Pancreas (tissue), 10 donors: ENCODE measurements at regions of chr3 and their contacts with region 1.

Region 1: GRCh38 chr3:128075516-128076482 is 23.6 kb downstream of the SEC61A1 start:
- DNase-seq: peak; percentile 78 to 99 (median 91)
- ATAC-seq: peak; percentile 82 to 96 (median 90)
- H3K4me3 ChIP-seq: peak overlapping the region in 3 of 4 donors; percentile 18 to 44 (median 31)
- H3K27ac ChIP-seq: peak overlapping the region in 3 of 4 donors; percentile 20 to 55 (median 25)
- H3K4me1 ChIP-seq: peaks cover 3 to 8% (median 7%) of the 10 kb centered on the region in 3 donors
- H3K27me3 ChIP-seq: no peaks in the 10 kb centered on the region
- CTCF ChIP-seq: peak; percentile 97 to 99 (median 98)

Region 2: DNA sequence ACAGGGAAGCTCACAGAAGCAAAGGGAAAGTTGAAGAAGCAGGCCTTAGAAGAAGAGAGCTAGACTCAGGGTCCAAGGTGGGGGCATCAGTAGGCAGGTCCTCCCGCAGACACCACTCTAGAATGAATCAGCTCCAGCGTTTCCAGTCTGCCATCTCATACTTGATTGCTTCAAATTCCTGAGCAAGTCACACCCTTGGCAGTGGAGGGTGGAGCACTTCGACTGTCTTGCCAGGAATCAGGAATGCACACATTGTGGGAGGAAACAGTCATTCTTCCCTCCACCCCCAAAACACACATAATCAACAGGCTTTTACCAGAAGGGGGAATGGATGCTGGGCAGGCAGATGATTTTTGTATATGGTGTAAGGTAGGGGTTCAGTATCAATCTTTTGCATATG is 1293.2 kb before region 1 on chr3:
- intact Hi-C with region 1: no loop called
- DNase-seq: no peak
- ATAC-seq: peak in 3 of 4 donors; percentile 26 to 38 (median 34)
- H3K4me3 ChIP-seq: no peak overlapping the region
- H3K27ac ChIP-seq: no peak overlapping the region
- H3K4me1 ChIP-seq: no peaks in the 10 kb centered on the region
- H3K27me3 ChIP-seq: no peaks in the 10 kb centered on the region
- CTCF ChIP-seq: no peak

Region 3: GRCh38 chr3:128133273-128134084 is 57.7 kb after region 1 on chr3:
- intact Hi-C with region 1: loop called in 1 of 3 experiments (anchors 5 kb)
- DNase-seq: peak in 1 of 6 donors; percentile 41
- ATAC-seq: peak in 3 of 4 donors; percentile 82 to 89 (median 85)
- H3K4me3 ChIP-seq: no peak overlapping the region
- H3K27ac ChIP-seq: no peak overlapping the region
- H3K4me1 ChIP-seq: no peaks in the 10 kb centered on the region
- H3K27me3 ChIP-seq: no peaks in the 10 kb centered on the region
- CTCF ChIP-seq: peak in 3 of 4 donors; percentile 27 to 53 (median 47)